Activated CD4-positive, alpha-beta memory T cell treated with anti-CD3 and anti-CD28 coated beads, Interleukin-2, amount 10 ng/mL, durations not matched to agents 7 days and 5 days (primary cell): ENCODE measurements at regions of chr6 and their contacts with region 1.

Region 1: GRCh38 chr6:138403801-138404661 is at the start of gene HEBP2:
- DNase-seq: peak; percentile 96
- H3K4me3 Mint-ChIP-seq: peak within 1 kb of the TSS; percentile 83
- H3K27ac Mint-ChIP-seq: peak within 1 kb of the TSS; percentile 73
- H3K4me1 Mint-ChIP-seq: peaks cover 33% of the 10 kb centered on the region
- H3K27me3 Mint-ChIP-seq: no peaks in the 10 kb centered on the region
- total RNA-seq, gene HEBP2: 69.5 to 70.3 TPM

Region 2: DNA sequence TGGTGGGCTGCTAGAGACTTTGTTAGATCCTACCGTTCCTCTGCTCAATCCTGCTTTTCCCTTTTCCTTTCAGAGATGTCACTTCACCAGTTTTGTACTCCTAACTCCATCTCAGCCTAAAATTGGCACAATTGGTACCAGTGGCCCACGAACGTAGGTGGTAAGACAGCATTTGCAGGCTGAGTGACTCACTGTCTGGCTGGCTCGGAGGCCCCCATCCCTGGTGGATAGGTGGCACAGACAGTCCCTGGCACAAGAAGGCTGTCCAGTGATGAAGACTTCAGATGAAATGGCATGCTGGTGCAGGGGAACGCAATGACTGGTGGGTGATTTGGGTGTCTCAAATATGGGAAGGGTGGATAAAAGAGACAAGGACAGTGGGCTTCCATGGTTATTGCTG is 11.1 kb after region 1 on chr6:
- CTCF ChIA-PET with region 1: interaction called, 3 read pairs
- POLR2A ChIA-PET with region 1: interaction called, 15 read pairs
- DNase-seq: no peak
- H3K4me3 Mint-ChIP-seq: no peak overlapping the region
- H3K27ac Mint-ChIP-seq: no peak overlapping the region
- H3K4me1 Mint-ChIP-seq: peaks cover 20% of the 10 kb centered on the region
- H3K27me3 Mint-ChIP-seq: no peaks in the 10 kb centered on the region

Region 3: GRCh38 chr6:138455746-138456400 is 51.8 kb after region 1 on chr6:
- CTCF ChIA-PET with region 1: interaction called, 3 read pairs
- POLR2A ChIA-PET with region 1: interaction called, 20 read pairs
- DNase-seq: peak; percentile 46
- H3K4me3 Mint-ChIP-seq: peak overlapping the region; percentile 58
- H3K27ac Mint-ChIP-seq: peak overlapping the region; percentile 89
- H3K4me1 Mint-ChIP-seq: peaks cover 33% of the 10 kb centered on the region
- H3K27me3 Mint-ChIP-seq: no peaks in the 10 kb centered on the region